Naive thymus-derived CD4-positive, alpha-beta T cell (primary cell): ENCODE measurements at regions of chr19 and their contacts with region 1.

Region 1: DNA sequence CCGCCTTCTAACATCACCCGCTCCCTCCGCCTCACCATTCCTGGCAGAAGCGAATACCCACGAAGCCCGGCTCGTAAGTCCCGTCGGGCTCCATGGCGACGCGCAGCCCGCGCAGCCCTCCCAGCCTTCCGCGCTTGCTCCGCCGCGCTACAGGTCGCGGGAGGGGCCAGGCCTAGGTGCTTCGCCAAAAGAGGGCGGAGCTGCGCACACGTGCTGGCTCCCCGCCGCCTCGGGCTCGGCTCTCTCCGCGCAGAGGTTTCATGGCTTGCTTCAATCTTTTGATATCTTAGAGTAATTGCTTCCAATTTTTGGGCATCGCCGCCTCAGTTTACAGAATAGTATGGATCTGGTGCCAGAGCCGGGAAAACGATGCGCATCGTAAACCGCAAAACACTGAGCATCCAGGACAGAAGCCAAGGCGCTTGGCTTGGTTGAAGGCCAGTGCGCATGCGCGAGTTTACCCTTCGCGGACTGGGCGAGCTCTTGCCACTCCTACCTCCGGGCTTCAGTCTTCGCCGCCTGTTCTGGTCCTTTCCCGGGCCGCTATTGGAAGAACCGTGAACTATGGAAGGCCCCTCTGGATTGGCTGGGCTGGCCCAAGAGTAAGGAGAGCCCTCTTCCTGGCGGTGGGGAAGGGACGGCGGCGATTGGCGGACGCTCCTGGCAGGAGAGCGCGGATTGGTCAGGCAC is at the start of gene POLR2I:
- DNase-seq: peak; percentile 95 to 100 (median 99)
- ATAC-seq: peak; percentile 92
- H3K4me3 ChIP-seq: peak within 1 kb of the TSS; percentile 97
- H3K4me3 Mint-ChIP-seq: peak within 1 kb of the TSS; percentile 89 to 98 (median 96)
- H3K27ac ChIP-seq: peak within 1 kb of the TSS; percentile 90
- H3K27ac Mint-ChIP-seq: peak within 1 kb of the TSS; percentile 97 to 99 (median 98)
- H3K4me1 ChIP-seq: peaks cover 14 to 15% of the 10 kb centered on the region in 2 donors
- H3K4me1 Mint-ChIP-seq: peaks cover 27 to 54% (median 42%) of the 10 kb centered on the region in 7 donors
- H3K27me3 ChIP-seq: no peaks in the 10 kb centered on the region
- H3K27me3 Mint-ChIP-seq: peaks cover 0 to 5% (median 0%) of the 10 kb centered on the region in 5 donors
- total RNA-seq, gene POLR2I: 20.9 to 56.7 (median 44.7) TPM

Region 2: GRCh38 chr19:35775298-35776110 is 339.4 kb before region 1 on chr19 and contains the start of gene ARHGAP33:
- CTCF ChIA-PET with region 1: no interaction called
- POLR2A ChIA-PET with region 1: no interaction called
- intact Hi-C with region 1: loop called in 1 of 2 experiments (anchors 1 kb)
- DNase-seq: peak; percentile 96 to 99 (median 98)
- ATAC-seq: peak; percentile 100
- H3K4me3 ChIP-seq: peak within 1 kb of the TSS; percentile 56
- H3K4me3 Mint-ChIP-seq: peak within 1 kb of the TSS; percentile 77 to 94 (median 86)
- H3K27ac ChIP-seq: peak within 1 kb of the TSS; percentile 61
- H3K27ac Mint-ChIP-seq: peak within 1 kb of the TSS in 7 of 9 donors; percentile 12 to 88 (median 84)
- H3K4me1 ChIP-seq: peaks cover 0 to 6% of the 10 kb centered on the region in 2 donors
- H3K4me1 Mint-ChIP-seq: peaks cover 11 to 28% (median 18%) of the 10 kb centered on the region in 7 donors
- H3K27me3 ChIP-seq: no peaks in the 10 kb centered on the region
- H3K27me3 Mint-ChIP-seq: no peaks in the 10 kb centered on the region
- total RNA-seq, gene ARHGAP33: 15.3 to 55.5 (median 23.4) TPM

Region 3: DNA sequence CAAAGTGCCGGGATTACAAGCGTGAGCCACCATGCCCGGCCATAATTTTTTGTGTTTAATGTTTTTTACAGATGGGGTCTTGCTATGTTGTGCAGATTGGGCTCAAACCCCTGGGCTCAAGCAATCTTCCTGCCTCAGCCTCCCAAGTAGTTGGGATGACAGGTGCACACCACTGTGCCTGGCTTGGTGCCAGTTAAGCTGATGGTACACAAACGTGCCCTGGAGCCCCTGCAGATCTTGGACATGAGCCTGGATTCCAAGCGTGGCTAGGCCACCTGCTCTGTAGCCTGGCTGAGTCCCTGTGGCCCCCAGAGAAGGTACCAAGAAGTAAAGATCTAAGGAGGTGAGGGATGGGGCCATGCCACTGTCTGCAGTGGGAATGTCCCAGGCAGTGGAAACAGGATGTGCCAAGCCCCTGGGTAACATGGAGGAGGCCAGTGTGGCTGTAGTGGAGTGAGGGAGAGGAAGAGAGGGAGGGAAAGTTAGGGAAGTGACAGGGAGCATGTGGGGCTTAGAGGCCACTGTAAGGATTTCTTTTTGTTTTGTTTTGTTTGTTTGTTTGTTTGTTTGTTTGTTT is 309.3 kb before region 1 on chr19:
- CTCF ChIA-PET with region 1: no interaction called
- POLR2A ChIA-PET with region 1: no interaction called
- intact Hi-C with region 1: no loop called
- DNase-seq: no peak
- ATAC-seq: no peak
- H3K4me3 ChIP-seq: no peak overlapping the region
- H3K4me3 Mint-ChIP-seq: no peak overlapping the region
- H3K27ac ChIP-seq: no peak overlapping the region
- H3K27ac Mint-ChIP-seq: no peak overlapping the region
- H3K4me1 ChIP-seq: no peaks in the 10 kb centered on the region
- H3K4me1 Mint-ChIP-seq: peaks cover 0 to 10% (median 7%) of the 10 kb centered on the region in 7 donors
- H3K27me3 ChIP-seq: no peaks in the 10 kb centered on the region
- H3K27me3 Mint-ChIP-seq: peaks cover 0 to 8% (median 0%) of the 10 kb centered on the region in 5 donors

Region 4: GRCh38 chr19:35995048-35995993 is 119.6 kb before region 1 on chr19 and contains the start of gene SDHAF1:
- CTCF ChIA-PET with region 1: no interaction called
- POLR2A ChIA-PET with region 1: interaction called, 3 read pairs
- intact Hi-C with region 1: loop called in 1 of 2 experiments (anchors 1 kb)
- DNase-seq: peak; percentile 77 to 94 (median 87)
- ATAC-seq: peak; percentile 96
- H3K4me3 ChIP-seq: peak within 1 kb of the TSS; percentile 84
- H3K4me3 Mint-ChIP-seq: peak within 1 kb of the TSS; percentile 89 to 99 (median 96)
- H3K27ac ChIP-seq: peak within 1 kb of the TSS; percentile 74
- H3K27ac Mint-ChIP-seq: peak within 1 kb of the TSS; percentile 90 to 97 (median 95)
- H3K4me1 ChIP-seq: peaks cover 11 to 16% of the 10 kb centered on the region in 2 donors
- H3K4me1 Mint-ChIP-seq: peaks cover 22 to 44% (median 33%) of the 10 kb centered on the region in 7 donors
- H3K27me3 ChIP-seq: no peaks in the 10 kb centered on the region
- H3K27me3 Mint-ChIP-seq: no peaks in the 10 kb centered on the region
- total RNA-seq, gene SDHAF1: 7.8 to 26.1 (median 17.8) TPM

Region 5: GRCh38 chr19:36103626-36104552 is 11.0 kb before region 1 on chr19:
- CTCF ChIA-PET with region 1: no interaction called
- POLR2A ChIA-PET with region 1: no interaction called
- intact Hi-C with region 1: no loop called
- DNase-seq: no peak
- ATAC-seq: no peak
- H3K4me3 ChIP-seq: no peak overlapping the region
- H3K4me3 Mint-ChIP-seq: no peak overlapping the region
- H3K27ac ChIP-seq: no peak overlapping the region
- H3K27ac Mint-ChIP-seq: no peak overlapping the region
- H3K4me1 ChIP-seq: no peaks in the 10 kb centered on the region
- H3K4me1 Mint-ChIP-seq: no peaks in the 10 kb centered on the region
- H3K27me3 ChIP-seq: no peaks in the 10 kb centered on the region
- H3K27me3 Mint-ChIP-seq: no peaks in the 10 kb centered on the region

Region 6: GRCh38 chr19:36139473-36140303 is 24.8 kb after region 1 on chr19 and contains the start of gene CAPNS1:
- CTCF ChIA-PET with region 1: interaction called, 3 read pairs
- POLR2A ChIA-PET with region 1: interaction called, 17 read pairs
- intact Hi-C with region 1: loop called (anchors 1 kb)
- DNase-seq: peak; percentile 82 to 95 (median 86)
- ATAC-seq: peak; percentile 83
- H3K4me3 ChIP-seq: peak within 1 kb of the TSS; percentile 99
- H3K4me3 Mint-ChIP-seq: peak within 1 kb of the TSS; percentile 91 to 98 (median 95)
- H3K27ac ChIP-seq: peak within 1 kb of the TSS; percentile 87
- H3K27ac Mint-ChIP-seq: peak within 1 kb of the TSS; percentile 85 to 97 (median 91)
- H3K4me1 ChIP-seq: peaks cover 6 to 9% of the 10 kb centered on the region in 2 donors
- H3K4me1 Mint-ChIP-seq: peaks cover 10 to 25% (median 15%) of the 10 kb centered on the region in 7 donors
- H3K27me3 ChIP-seq: no peaks in the 10 kb centered on the region
- H3K27me3 Mint-ChIP-seq: no peaks in the 10 kb centered on the region
- total RNA-seq, gene CAPNS1: 197 to 473 (median 207) TPM

Region 7: GRCh38 chr19:36149673-36150406 is 34.9 kb after region 1 on chr19:
- CTCF ChIA-PET with region 1: no interaction called
- POLR2A ChIA-PET with region 1: no interaction called
- intact Hi-C with region 1: no loop called
- DNase-seq: no peak
- ATAC-seq: no peak
- H3K4me3 ChIP-seq: no peak overlapping the region
- H3K4me3 Mint-ChIP-seq: no peak overlapping the region
- H3K27ac ChIP-seq: no peak overlapping the region
- H3K27ac Mint-ChIP-seq: peak overlapping the region in 2 of 9 donors; percentile 34 to 52
- H3K4me1 ChIP-seq: no peaks in the 10 kb centered on the region
- H3K4me1 Mint-ChIP-seq: peaks cover 0 to 13% (median 5%) of the 10 kb centered on the region in 7 donors
- H3K27me3 ChIP-seq: no peaks in the 10 kb centered on the region
- H3K27me3 Mint-ChIP-seq: no peaks in the 10 kb centered on the region